ENCODE measurements at regions of chr7 and their contacts with region 1.

Region 1: DNA sequence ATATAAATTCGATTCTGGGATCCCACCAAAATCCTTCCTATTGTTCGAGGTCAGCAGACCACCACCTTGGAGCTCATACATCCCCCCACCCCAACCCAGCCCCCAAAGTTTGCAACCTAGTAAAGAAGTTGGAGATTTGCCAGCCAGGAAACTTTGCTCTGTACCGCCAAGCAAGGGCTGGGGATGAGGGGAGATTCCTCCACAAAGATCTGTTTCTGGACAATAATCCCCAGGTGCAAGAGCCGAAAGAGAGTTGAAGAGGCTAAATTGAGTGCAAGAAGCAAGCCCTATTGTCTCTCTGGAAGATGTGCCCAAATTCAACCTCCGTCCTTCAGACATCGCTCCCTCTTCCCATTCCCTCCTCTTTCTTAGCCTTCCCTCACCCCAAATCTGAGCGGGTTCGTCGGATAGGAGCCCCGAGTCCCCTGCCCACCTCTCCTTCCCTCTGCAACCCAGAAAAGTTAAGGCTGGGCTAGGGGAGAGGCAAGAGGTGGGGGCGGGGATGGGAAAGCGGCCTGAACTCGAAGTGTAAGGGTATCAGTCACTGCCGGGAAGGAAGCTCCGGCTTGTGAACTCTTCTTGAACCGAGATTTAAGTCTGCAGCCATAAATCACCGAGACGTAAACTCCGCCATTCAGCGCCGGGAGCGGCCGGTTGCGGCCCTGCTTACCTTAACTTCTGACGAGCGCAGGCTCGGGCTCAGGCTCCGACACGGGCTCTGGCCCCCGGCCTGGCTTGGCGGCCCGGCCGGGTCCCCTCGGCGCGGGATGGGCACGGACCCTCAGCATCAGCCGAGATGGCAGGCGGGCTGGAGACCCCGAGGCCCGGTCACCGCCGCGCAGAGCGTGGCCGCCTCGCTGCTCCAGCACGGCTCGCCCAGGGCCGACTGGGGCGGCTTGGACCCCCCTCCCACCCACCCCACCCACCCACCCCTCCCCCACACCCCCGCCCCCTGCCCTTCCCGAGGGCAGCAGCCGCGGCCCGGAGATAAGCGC is 10.8 kb upstream of the HOXA2 start:
- DNase-seq: peak; percentile 76 to 90
- H3K4me3 ChIP-seq: peak overlapping the region; percentile 80
- H3K27ac ChIP-seq: peak overlapping the region; percentile 92
- H3K4me1 ChIP-seq: peaks cover 47% of the 10 kb centered on the region
- H3K27me3 ChIP-seq: no peaks in the 10 kb centered on the region
- CTCF ChIP-seq: no peak

Region 2: DNA sequence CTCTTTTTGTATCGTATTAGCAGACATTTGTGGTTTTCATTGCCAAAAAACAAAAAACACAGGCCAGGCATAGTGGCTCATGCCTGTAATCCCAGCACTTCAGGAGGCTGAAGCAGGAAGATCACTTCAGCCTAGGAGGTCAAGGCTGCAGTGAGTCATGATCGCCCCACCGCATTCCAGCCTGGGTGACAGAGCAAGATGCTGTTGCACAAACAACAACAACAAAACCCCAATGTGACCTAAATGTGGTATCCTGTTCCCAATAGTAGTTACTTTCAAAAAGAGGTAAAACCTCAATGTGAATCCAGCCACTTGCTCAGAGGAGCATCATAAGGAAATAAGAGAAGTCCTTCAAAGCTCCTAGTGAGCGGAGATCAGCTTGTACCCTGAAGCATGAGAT is 203.0 kb before region 1 on chr7:
- CTCF ChIA-PET with region 1: interaction called, 3 read pairs
- POLR2A ChIA-PET with region 1: no interaction called
- intact Hi-C with region 1: loop called (anchors 1 kb)
- DNase-seq: peak; percentile 87 to 96
- H3K4me3 ChIP-seq: peak overlapping the region; percentile 16; the same call in 1 of the 2 replicates
- H3K27ac ChIP-seq: peak overlapping the region; percentile 79
- H3K4me1 ChIP-seq: peaks cover 47% of the 10 kb centered on the region
- H3K27me3 ChIP-seq: no peaks in the 10 kb centered on the region
- CTCF ChIP-seq: no peak

Region 3: DNA sequence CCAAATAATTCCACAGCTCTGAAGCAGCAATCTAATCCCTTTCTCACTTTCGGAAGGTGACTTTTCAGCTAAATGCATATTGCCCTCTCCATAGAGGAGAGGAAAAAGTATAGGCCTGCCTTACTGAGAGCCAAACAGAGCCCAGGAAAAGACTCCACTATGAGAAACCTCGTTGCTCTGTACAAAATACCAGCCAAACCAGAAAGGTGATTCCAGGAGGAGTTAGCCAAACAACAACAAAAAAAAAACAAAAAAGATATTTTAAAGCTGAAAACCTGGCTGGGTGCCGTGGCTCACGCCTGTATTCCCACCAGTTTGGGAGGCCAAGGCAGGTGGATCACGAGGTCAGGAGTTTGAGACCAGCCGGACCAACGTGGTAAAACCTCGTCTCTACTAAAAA is 88.0 kb before region 1 on chr7:
- CTCF ChIA-PET with region 1: no interaction called
- POLR2A ChIA-PET with region 1: no interaction called
- intact Hi-C with region 1: loop called (anchors 5 kb)
- DNase-seq: peak; percentile 45 to 52
- H3K4me3 ChIP-seq: no peak overlapping the region
- H3K27ac ChIP-seq: no peak overlapping the region
- H3K4me1 ChIP-seq: peaks cover 10% of the 10 kb centered on the region
- H3K27me3 ChIP-seq: no peaks in the 10 kb centered on the region
- CTCF ChIP-seq: no peak

Region 4: DNA sequence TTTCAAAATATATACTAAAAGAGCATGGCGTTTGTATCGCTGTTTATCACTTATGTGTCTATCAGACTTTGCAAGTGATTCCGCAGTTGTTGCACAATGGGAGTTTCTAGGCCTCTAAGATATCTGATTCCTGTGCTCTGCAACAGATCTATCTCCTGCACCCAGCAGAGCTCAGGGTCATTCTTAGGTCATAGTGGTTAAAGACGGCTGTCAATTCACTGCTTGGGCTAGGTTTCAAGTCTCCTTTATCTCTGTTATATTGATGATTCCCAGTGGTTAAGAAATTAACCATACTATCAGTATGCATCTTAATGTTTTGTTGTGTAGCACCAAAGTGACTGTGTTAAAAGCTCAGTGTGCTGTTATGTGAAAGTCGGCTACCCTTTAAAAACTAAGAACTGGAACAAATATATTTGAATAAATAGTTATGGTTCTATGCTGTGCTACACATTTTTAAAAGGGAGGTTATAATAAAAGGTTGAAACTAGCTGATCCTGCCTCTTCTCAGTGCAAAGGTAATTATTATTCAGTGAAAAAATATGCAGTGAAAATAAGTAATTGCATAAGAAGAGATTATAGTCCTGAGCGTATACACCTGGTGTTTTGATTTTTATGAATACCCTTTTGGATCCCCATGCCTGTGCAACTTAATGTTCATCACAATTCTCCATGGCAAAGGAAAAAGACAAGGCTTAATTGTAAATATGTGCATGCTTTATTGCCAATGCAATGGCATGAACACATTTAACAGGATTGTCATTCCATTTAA is 41.4 kb before region 1 on chr7:
- CTCF ChIA-PET with region 1: no interaction called
- POLR2A ChIA-PET with region 1: interaction called, 3 read pairs
- intact Hi-C with region 1: loop called (anchors 2 kb)
- DNase-seq: peak; percentile 37 to 90
- H3K4me3 ChIP-seq: peak overlapping the region; percentile 6; the same call in 1 of the 2 replicates
- H3K27ac ChIP-seq: peak overlapping the region; percentile 61
- H3K4me1 ChIP-seq: peaks cover 63% of the 10 kb centered on the region
- H3K27me3 ChIP-seq: no peaks in the 10 kb centered on the region
- CTCF ChIP-seq: no peak

Measured in PC-9 (cell line).